ENCODE measurements at regions of chr1 and their contacts with region 1.

Region 1: DNA sequence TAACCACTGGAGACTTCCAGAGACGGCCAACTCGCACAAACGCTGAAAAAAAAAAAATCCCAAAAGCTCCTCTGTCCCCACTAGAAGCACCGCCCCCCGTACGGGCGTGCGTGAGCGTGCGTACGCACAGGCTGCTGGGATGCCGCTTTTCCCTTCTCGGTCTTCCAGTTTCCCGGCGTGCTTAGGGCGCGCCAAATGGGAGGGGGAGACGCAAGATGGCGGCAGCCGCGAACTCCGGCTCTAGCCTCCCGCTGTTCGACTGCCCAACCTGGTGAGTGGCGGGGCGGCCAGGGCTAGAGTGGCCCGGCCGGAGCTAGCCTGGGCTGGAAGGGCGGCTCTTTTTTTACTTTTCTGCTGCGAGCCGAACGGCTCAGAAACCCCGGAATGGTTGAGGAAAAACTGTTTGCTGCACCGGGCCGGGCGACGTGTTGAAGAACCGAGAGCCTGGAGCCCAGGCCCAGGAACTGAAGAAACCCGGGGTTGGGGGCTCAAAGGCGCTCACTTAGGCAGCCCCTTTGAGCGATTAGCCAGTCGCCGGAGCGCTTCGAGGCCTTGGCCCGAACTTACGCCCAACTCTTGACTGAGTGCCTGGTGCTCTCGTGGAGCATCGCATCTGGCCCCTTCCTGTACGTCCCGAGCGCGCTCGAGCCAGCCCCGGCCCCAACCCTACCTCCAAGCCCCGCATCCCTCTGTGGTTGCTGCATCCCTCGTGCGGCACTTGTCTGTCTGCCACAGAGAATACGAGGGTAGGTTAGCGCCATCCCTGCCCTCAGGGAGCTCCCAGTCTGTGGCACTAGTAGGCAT is at the start of gene PPP1R8:
- DNase-seq: peak; percentile 96
- H3K4me3 ChIP-seq: peak within 1 kb of the TSS; percentile 90 to 93 (median 92)
- H3K27ac ChIP-seq: peak within 1 kb of the TSS; percentile 86
- H3K4me1 ChIP-seq: peaks cover 19% of the 10 kb centered on the region
- H3K27me3 ChIP-seq: no peaks in the 10 kb centered on the region
- CTCF ChIP-seq: no peak
- POLR2A ChIP-seq: peak; percentile 97
- total RNA-seq, gene PPP1R8: 45.4 and 48.5 TPM in 2 replicates

Region 2: DNA sequence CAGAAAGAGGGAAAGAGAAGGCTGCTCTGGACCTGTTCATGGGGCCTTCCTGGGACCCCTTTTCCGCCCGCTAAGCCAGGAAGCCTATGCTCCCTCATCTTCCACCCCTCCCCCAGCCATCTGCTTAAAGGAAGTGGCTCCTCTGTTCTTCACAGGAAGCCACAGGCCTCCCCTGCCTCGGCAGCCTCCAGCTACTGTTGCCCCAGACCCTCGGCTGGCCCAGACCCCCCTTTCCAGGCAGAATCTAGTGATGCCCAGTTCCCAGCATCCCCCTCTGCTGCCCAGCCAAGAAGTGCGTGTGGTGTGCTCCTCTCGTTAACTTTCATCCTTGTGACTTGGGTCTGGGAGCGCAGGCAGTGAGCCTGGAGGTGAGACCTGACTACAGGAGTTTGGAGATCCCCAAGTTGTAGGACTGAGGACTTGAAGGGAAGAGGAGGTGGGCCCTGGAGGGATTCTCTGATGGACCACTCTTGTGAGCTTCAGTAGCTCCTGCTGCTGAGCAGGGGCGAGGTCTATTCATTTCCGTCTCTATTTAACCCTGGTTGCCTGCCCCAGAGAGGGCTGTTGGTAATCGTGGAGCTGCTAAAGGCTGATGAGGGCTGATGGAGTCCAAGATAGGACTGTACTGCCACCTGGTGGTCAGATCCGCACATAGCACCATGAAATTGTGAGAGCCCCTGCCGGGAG is 168.0 kb before region 1 on chr1:
- CTCF ChIA-PET with region 1: no interaction called
- POLR2A ChIA-PET with region 1: no interaction called
- dilution Hi-C with region 1: no loop called
- intact Hi-C with region 1: no loop called
- DNase-seq: peak; percentile 83
- H3K4me3 ChIP-seq: no peak overlapping the region
- H3K27ac ChIP-seq: no peak overlapping the region
- H3K4me1 ChIP-seq: peaks cover 14% of the 10 kb centered on the region
- H3K27me3 ChIP-seq: no peaks in the 10 kb centered on the region
- CTCF ChIP-seq: peak; percentile 80 to 85
- POLR2A ChIP-seq: no peak

Region 3: DNA sequence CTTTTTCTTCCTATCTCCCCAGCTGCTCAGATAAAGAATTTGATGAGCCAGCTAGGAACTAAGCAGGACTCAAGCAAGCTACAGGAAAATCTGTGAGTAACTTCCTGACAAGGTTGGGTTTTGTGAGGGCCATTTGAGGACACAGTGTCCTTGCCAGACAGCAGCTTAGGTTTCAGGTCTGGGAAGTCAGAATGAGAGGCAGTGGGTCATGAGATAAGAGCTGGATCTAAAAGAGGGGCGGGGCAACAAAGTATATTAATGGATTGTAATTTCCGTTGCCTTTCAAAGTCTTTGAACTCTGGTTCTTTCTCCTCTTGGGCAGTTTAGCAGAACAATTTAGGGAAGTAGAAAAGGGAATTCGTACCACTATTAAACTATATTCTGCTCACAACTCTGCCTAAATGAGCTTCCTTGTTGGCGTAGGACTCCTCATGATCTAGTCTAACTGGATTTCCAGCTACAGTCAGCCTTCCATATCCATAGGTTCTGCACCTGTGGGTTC is 41.2 kb before region 1 on chr1:
- CTCF ChIA-PET with region 1: no interaction called
- POLR2A ChIA-PET with region 1: interaction called, 4 read pairs
- dilution Hi-C with region 1: no loop called
- intact Hi-C with region 1: loop called (anchors 2 kb)
- DNase-seq: peak; percentile 92
- H3K4me3 ChIP-seq: peak overlapping the region in 1 of 3 experiments; percentile 7
- H3K27ac ChIP-seq: peak overlapping the region; percentile 79
- H3K4me1 ChIP-seq: peaks cover 37% of the 10 kb centered on the region
- H3K27me3 ChIP-seq: no peaks in the 10 kb centered on the region
- CTCF ChIP-seq: no peak
- POLR2A ChIP-seq: peak; percentile 19

Measured in endothelial cell of umbilical vein (primary cell).